Esophagus muscularis mucosa (tissue), 4 donors: ENCODE measurements at regions of chr11 and their contacts with region 1.

Region 1: DNA sequence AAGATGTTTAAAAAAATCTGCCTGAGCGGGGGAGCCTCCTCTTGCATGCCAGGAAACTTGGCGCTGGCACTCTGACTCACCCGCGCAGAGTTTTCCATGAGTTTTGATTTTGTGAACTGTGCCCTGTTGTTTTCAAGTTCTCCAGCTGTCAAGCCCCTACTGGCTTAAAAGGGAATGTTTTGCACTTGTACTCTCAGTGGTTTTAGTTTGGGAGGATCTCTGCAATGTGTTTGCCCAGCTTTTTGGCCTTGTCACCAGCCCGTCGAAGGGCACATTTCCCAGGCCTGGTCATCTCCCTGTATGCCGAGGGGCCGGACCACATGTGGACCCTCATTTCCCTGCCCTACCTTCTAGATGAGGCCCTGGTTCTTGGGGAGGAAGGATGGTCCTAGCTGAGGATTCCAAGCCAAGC is 12.2 kb downstream of the MRGPRF start:
- DNase-seq: no peak
- H3K4me3 ChIP-seq: no peak overlapping the region
- H3K27ac ChIP-seq: peak overlapping the region; percentile 95 to 99 (median 97)
- H3K4me1 ChIP-seq: peaks cover 41 to 87% (median 85%) of the 10 kb centered on the region in 4 donors
- H3K27me3 ChIP-seq: no peaks in the 10 kb centered on the region
- CTCF ChIP-seq: peak; percentile 30 to 75 (median 46)
- EP300 ChIP-seq: no peak
- POLR2A ChIP-seq: no peak

Region 2: GRCh38 chr11:68946465-68947036 is 54.3 kb before region 1 on chr11:
- intact Hi-C with region 1: loop called (anchors 5 kb)
- DNase-seq: no peak
- H3K4me3 ChIP-seq: peak overlapping the region; percentile 10 to 20 (median 18)
- H3K27ac ChIP-seq: peak overlapping the region; percentile 93 to 94 (median 94)
- H3K4me1 ChIP-seq: peaks cover 9 to 80% (median 71%) of the 10 kb centered on the region in 4 donors
- H3K27me3 ChIP-seq: no peaks in the 10 kb centered on the region
- CTCF ChIP-seq: no peak
- EP300 ChIP-seq: no peak
- POLR2A ChIP-seq: no peak

Region 3: GRCh38 chr11:68962527-68963250 is 38.1 kb before region 1 on chr11:
- intact Hi-C with region 1: loop called (anchors 5 kb)
- DNase-seq: no peak
- H3K4me3 ChIP-seq: no peak overlapping the region
- H3K27ac ChIP-seq: no peak overlapping the region
- H3K4me1 ChIP-seq: peaks cover 0 to 3% (median 0%) of the 10 kb centered on the region in 4 donors
- H3K27me3 ChIP-seq: no peaks in the 10 kb centered on the region
- CTCF ChIP-seq: peak; percentile 34 to 56 (median 50)
- EP300 ChIP-seq: no peak
- POLR2A ChIP-seq: no peak

Region 4: DNA sequence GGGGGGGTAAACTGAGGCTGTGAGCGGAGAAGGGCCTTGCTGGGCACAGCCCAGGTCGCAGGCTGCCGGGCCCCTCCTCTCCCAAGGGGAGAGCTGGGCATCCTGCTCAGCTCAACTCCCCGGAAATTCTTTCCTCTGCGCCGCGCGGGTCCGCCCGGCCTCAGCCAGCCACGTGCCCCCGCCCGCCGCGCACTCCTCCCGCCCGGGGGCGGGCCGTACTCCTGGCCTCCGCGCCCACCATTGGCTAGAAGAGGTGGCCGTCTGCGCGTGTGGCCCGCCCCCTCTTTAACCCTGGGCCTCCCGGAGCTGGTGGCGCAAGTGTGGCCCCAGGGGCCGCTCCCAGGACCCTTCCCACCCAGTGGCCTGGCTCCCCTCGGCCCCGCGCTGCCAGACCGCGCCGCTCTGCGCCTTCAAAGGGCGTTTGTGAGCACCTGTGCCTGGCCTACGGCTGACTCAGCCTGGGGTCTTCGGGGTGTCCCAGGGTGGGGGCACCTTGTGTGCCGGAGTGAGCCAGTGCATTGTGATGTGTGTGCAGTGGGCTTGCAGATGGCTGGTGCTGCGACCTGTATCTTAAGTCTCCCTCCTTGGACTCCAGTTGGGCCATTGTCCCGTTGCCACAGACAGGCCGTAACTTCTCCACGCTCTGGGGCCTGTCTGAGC is 10.3 kb after region 1 on chr11:
- intact Hi-C with region 1: no loop called
- DNase-seq: no peak
- H3K4me3 ChIP-seq: peak overlapping the region; percentile 65 to 83 (median 72)
- H3K27ac ChIP-seq: peak overlapping the region; percentile 95 to 99 (median 97)
- H3K4me1 ChIP-seq: peaks cover 57 to 92% (median 79%) of the 10 kb centered on the region in 4 donors
- H3K27me3 ChIP-seq: peaks cover 0 to 18% (median 0%) of the 10 kb centered on the region in 4 donors
- CTCF ChIP-seq: no peak
- EP300 ChIP-seq: no peak
- POLR2A ChIP-seq: peak; percentile 69

Region 5: DNA sequence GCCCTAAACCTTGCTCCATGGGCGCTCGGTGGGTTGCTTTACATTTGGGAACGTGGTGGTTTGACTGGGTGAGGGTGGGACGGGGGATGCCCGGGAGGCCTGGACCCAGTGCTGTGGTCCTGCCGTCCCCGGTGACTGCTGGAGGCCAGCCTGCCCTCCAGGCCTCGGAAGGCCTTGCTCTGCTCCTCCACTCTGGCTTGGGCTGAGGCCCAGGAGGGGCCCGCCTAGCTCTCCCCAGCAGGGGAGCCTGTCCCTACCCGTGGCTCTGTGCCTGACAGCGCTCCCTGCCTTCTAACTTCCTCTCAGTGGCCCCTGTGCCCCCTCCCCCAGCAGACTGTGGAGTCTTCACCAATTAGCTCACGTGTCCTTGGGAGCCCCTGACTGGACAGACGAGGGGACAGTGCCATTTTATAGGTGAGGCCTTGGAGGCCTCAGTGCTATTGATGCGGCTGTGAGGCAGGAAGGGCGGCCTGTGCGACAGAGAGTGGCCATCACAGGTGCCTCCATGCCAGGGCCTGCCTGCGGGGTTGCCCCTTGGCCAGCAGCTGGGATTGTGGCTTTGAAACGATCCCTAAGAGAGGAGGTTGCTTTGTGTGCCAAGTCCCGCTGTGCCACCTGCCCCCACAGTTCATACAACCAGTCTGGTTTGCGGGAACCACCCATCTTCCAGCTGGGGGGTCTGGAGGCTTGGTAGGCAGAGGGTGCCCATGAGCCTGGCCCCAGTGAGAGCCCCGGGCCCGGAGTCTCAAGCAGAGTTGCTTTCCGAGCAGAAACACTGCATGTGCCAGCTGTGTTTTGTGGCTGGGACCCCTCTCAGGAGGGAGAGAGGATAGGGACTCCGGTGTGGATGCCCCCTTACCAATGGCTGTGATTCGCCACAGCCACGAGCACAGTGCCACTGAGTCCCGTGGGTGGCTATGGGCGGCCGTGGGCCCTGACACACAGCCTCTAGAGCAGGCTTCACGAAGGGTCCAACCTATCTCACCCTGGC is 65.6 kb after region 1 on chr11:
- intact Hi-C with region 1: no loop called
- DNase-seq: no peak
- H3K4me3 ChIP-seq: no peak overlapping the region
- H3K27ac ChIP-seq: peak overlapping the region; percentile 69 to 76 (median 72)
- H3K4me1 ChIP-seq: peaks cover 6 to 55% (median 42%) of the 10 kb centered on the region in 4 donors
- H3K27me3 ChIP-seq: no peaks in the 10 kb centered on the region
- CTCF ChIP-seq: no peak
- EP300 ChIP-seq: no peak
- POLR2A ChIP-seq: no peak